Psoas muscle (tissue), 8 donors: ENCODE measurements at regions of chr2 and their contacts with region 1.

Region 1: GRCh38 chr2:99180755-99181623 is at the starts of genes MITD1 and MRPL30:
- DNase-seq: peak; percentile 89 to 93
- ATAC-seq: peak; percentile 96 to 98 (median 98)
- H3K4me3 ChIP-seq: peak within 1 kb of the TSS; percentile 88
- H3K27ac ChIP-seq: peak within 1 kb of the TSS; percentile 71
- H3K4me1 ChIP-seq: peaks cover 31% of the 10 kb centered on the region
- H3K27me3 ChIP-seq: no peaks in the 10 kb centered on the region
- CTCF ChIP-seq: no peak
- total RNA-seq, gene MITD1: 6.8 to 10.5 (median 8.6) TPM
- total RNA-seq, gene MRPL30: 31.9 to 37.8 (median 36.7) TPM

Region 2: GRCh38 chr2:99278793-99279291 is 97.9 kb after region 1 on chr2:
- intact Hi-C with region 1: no loop called
- DNase-seq: no peak
- ATAC-seq: peak in 3 of 4 donors; percentile 24 to 57 (median 38)
- H3K4me3 ChIP-seq: no peak overlapping the region
- H3K27ac ChIP-seq: no peak overlapping the region
- H3K4me1 ChIP-seq: no peaks in the 10 kb centered on the region
- H3K27me3 ChIP-seq: no peaks in the 10 kb centered on the region
- CTCF ChIP-seq: no peak

Region 3: DNA sequence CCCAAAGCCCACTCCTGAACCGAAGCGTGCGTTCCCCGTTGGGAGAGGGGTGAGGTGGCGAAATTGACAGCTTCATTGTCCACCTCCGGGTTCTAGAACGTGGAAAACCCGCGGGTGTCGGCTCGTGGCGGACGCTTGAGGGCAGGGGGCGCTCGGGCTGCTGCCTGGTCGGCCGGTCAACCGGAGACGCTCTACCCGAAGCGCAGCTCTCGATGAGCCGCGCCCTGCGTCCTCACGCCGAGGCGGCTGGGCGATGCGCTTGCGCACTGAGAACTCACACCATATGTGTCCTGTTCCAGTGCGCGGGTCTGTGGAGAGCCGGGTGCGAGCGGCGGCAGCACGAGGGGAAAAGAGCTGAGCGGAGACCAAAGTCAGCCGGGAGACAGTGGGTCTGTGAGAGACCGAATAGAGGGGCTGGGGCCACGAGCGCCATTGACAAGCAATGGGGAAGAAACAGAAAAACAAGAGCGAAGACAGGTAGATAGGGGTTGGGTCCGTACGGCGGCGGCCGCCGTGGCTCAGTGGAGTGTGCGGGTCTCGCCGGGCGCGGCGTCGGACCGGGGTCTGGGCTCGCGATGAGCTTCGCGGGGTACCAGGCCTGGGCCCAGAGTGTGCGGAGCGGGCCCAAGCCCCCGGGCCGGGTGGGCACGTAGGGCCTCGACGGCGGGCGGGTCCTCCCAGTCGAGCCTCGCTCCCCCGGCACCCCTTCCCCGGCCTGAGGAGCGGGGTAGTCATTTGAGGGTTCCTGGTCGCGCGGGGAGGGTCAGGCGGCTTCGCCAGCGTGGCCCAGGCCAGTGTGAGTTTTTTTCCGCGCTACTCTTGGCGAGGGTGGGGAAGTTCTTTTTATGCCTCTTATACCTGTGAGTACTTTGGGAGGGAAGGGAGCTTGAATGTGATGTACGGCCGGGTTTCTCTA is 156.4 kb after region 1 on chr2 and contains the start of gene EIF5B:
- intact Hi-C with region 1: loop called (anchors 2 to 10 kb)
- DNase-seq: peak; percentile 97 to 99
- ATAC-seq: peak; percentile 88 to 91 (median 89)
- H3K4me3 ChIP-seq: peak within 1 kb of the TSS; percentile 95
- H3K27ac ChIP-seq: peak within 1 kb of the TSS; percentile 97
- H3K4me1 ChIP-seq: peaks cover 50% of the 10 kb centered on the region
- H3K27me3 ChIP-seq: no peaks in the 10 kb centered on the region
- CTCF ChIP-seq: peak; percentile 59
- total RNA-seq, gene EIF5B: 54.2 to 94.3 (median 75.2) TPM